Activated T-helper 1 cell treated with anti-CD3 and anti-CD28 coated beads, Interleukin-12 subunit alpha, Interleukin-12 subunit beta, Interleukin-2, Interleukin-4 antibody, amounts not matched to agents 30 ng/mL and 10 ng/mL and 1 ng/mL, durations not matched to agents 14 hours and 24 hours and 36 hours (primary cell): ENCODE measurements at regions of chr5 and their contacts with region 1.

Region 1: DNA sequence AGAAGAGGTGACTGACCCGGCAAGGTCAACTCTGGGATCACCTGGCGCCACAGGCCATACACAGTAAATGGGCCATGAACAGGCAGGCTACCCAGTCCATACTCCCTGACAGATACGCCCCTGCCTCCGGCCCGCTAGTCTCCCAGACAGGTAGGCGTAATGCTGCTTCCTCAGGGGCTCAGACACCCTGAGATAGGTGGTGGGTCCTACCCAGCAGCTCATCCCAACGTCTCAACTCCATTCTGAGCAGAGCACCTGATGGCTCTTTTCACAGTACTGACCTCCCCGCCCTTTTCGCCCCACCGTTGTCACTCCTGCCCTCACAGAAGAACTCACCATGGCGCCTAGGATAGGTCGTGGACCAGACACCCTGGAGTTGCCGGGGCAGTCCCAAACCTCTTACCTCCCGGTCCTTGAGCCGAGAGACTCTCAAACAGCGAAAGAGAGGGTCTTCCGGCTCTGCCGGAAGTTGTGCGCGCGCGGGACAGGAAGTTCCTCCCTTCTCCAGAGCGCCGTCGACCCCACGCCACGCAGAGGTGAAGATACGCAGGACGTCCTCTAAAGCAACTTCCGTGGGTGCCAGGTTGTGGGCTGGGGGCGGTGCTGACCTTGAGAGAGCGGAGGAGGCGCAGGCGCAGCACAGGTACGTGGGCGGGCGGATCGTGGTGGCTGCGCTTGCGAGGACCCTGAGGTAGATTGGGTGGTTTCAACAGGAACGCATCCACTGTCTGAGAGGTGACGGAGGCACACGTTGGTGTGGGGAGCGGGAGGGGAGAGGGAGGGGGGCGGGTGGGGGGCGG is at the start of gene TMEM161B:
- DNase-seq: peak; percentile 92
- H3K4me3 Mint-ChIP-seq: peak within 1 kb of the TSS; percentile 97
- H3K27ac Mint-ChIP-seq: peak within 1 kb of the TSS; percentile 98
- H3K4me1 Mint-ChIP-seq: peaks cover 47% of the 10 kb centered on the region
- H3K27me3 Mint-ChIP-seq: no peaks in the 10 kb centered on the region
- total RNA-seq, gene TMEM161B: 26.6 and 28.4 TPM in 2 replicates

Region 2: GRCh38 chr5:88203981-88204750 is 64.4 kb before region 1 on chr5:
- intact Hi-C with region 1: loop called (anchors 1 kb)
- DNase-seq: peak; percentile 5
- H3K4me3 Mint-ChIP-seq: peak overlapping the region; percentile 24
- H3K27ac Mint-ChIP-seq: peak overlapping the region; percentile 72
- H3K4me1 Mint-ChIP-seq: peaks cover 14% of the 10 kb centered on the region
- H3K27me3 Mint-ChIP-seq: no peaks in the 10 kb centered on the region

Region 3: GRCh38 chr5:88251048-88251711 is 17.4 kb before region 1 on chr5:
- intact Hi-C with region 1: loop called (anchors 1 kb)
- DNase-seq: no peak
- H3K4me3 Mint-ChIP-seq: peak overlapping the region; percentile 57
- H3K27ac Mint-ChIP-seq: peak overlapping the region; percentile 72
- H3K4me1 Mint-ChIP-seq: peaks cover 54% of the 10 kb centered on the region
- H3K27me3 Mint-ChIP-seq: no peaks in the 10 kb centered on the region

Region 4: GRCh38 chr5:88502179-88503040 is 233.8 kb after region 1 on chr5:
- intact Hi-C with region 1: loop called (anchors 5 kb)
- DNase-seq: no peak
- H3K4me3 Mint-ChIP-seq: peak overlapping the region; percentile 81
- H3K27ac Mint-ChIP-seq: peak overlapping the region; percentile 84
- H3K4me1 Mint-ChIP-seq: peaks cover 25% of the 10 kb centered on the region
- H3K27me3 Mint-ChIP-seq: peaks cover 15% of the 10 kb centered on the region

Region 5: GRCh38 chr5:88660947-88661805 is 392.6 kb after region 1 on chr5:
- intact Hi-C with region 1: loop called (anchors 10 kb)
- DNase-seq: no peak
- H3K4me3 Mint-ChIP-seq: peak overlapping the region; percentile 65
- H3K27ac Mint-ChIP-seq: peak overlapping the region; percentile 61
- H3K4me1 Mint-ChIP-seq: peaks cover 23% of the 10 kb centered on the region
- H3K27me3 Mint-ChIP-seq: peaks cover 71% of the 10 kb centered on the region